Heart left ventricle (tissue), 16 donors: ENCODE measurements at regions of chr5 and their contacts with region 1.

Region 1: GRCh38 chr5:176660860-176661641 is 13.8 kb downstream of the TSPAN17 start:
- DNase-seq: peak; percentile 71 to 87 (median 76)
- ATAC-seq: peak; percentile 68 to 81 (median 77)
- H3K4me3 ChIP-seq: no peak overlapping the region
- H3K27ac ChIP-seq: no peak overlapping the region
- H3K4me1 ChIP-seq: peaks cover 0 to 31% (median 12%) of the 10 kb centered on the region in 12 donors
- H3K27me3 ChIP-seq: peaks cover 0 to 40% (median 14%) of the 10 kb centered on the region in 9 donors
- CTCF ChIP-seq: peak; percentile 85 to 100 (median 97)
- POLR2A ChIP-seq: no peak

Region 2: DNA sequence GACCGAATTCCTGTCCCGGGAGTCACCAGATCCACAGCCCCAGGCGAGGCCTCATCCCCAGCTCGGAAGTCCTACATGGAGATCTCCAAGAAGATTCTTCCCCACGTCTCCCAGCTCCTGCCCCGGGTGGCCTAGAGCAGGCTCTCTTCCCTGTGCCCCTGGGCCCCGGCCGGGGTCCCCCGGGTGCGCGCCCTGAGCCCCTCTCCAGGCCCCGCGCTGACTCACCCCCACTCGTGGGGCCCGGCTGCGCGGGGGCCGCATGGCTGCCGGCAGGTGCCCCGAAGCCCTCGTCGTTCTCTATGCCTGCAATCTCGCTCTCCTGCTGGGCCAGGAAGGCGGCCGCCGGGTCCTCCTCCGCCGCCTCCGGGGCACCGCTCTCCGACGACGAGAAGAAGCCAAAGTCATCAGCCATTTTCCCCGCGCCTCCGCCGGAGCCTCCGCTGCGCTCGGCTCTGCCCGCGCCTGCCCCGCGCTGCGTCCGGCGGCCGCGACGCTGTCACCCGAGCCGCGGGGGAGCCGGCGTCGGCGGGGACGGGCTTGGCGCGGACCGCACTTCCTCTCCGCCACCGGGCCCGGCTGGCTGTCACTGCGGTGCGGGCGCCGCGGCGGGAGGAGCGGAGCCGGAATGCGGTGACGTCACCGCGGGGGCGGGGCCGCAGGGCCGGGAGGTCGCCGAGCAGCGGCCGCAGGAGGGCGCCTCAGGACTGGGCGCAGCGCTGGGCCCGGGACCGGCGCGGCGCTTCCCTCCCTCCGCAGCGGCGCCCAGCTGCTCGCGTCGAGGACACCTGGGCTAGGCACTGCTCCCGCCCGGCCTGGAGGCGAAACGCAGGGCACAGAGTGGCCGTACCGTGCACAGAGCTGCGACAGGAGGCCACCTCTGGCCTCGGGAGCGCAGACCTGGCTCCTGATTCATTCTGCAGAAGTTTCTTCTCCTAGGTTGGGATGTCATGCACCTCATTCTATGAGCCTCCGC is 244.8 kb before region 1 on chr5 and contains the start of gene CLTB:
- intact Hi-C with region 1: loop called in 1 of 10 experiments (anchors 10 kb)
- DNase-seq: peak; percentile 92 to 97 (median 94)
- ATAC-seq: peak; percentile 90 to 94 (median 93)
- H3K4me3 ChIP-seq: peak within 1 kb of the TSS; percentile 47 to 100 (median 84)
- H3K27ac ChIP-seq: peak within 1 kb of the TSS; percentile 83 to 99 (median 96)
- H3K4me1 ChIP-seq: peaks cover 8 to 52% (median 42%) of the 10 kb centered on the region in 12 donors
- H3K27me3 ChIP-seq: no peaks in the 10 kb centered on the region
- CTCF ChIP-seq: peak; percentile 43 to 92 (median 83)
- POLR2A ChIP-seq: peak; percentile 85 to 93
- total RNA-seq, gene CLTB: 185 to 401 (median 231) TPM

Region 3: GRCh38 chr5:176536902-176537607 is 124.0 kb before region 1 on chr5 and contains the start of gene RNF44:
- intact Hi-C with region 1: no loop called
- DNase-seq: peak; percentile 97 to 99 (median 98)
- ATAC-seq: peak; percentile 83 to 88 (median 88)
- H3K4me3 ChIP-seq: peak within 1 kb of the TSS; percentile 56 to 98 (median 88)
- H3K27ac ChIP-seq: peak within 1 kb of the TSS; percentile 92 to 100 (median 96)
- H3K4me1 ChIP-seq: peaks cover 15 to 78% (median 55%) of the 10 kb centered on the region in 12 donors
- H3K27me3 ChIP-seq: no peaks in the 10 kb centered on the region
- CTCF ChIP-seq: no peak
- POLR2A ChIP-seq: peak in 1 of 2 donors; percentile 36
- total RNA-seq, gene RNF44: 9.2 to 35.7 (median 21.0) TPM

Region 4: GRCh38 chr5:176817841-176818377 is 156.9 kb after region 1 on chr5:
- intact Hi-C with region 1: loop called in 2 of 10 experiments (anchors 2 to 10 kb)
- DNase-seq: peak in 1 of 5 donors; percentile 22
- ATAC-seq: peak in 1 of 4 donors; percentile 34
- H3K4me3 ChIP-seq: peak overlapping the region in 11 of 12 donors; percentile 10 to 51 (median 40)
- H3K27ac ChIP-seq: no peak overlapping the region
- H3K4me1 ChIP-seq: peaks cover 0 to 15% (median 3%) of the 10 kb centered on the region in 12 donors
- H3K27me3 ChIP-seq: peaks cover 29 to 79% (median 45%) of the 10 kb centered on the region in 9 donors
- CTCF ChIP-seq: peak in 3 of 12 donors; percentile 18 to 21 (median 20)
- POLR2A ChIP-seq: no peak

Region 5: GRCh38 chr5:176837707-176838115 is 176.7 kb after region 1 on chr5:
- intact Hi-C with region 1: loop called in 1 of 10 experiments (anchors 10 kb)
- DNase-seq: peak; percentile 87 to 94 (median 93)
- ATAC-seq: peak; percentile 80 to 98 (median 96)
- H3K4me3 ChIP-seq: no peak overlapping the region
- H3K27ac ChIP-seq: no peak overlapping the region
- H3K4me1 ChIP-seq: no peaks in the 10 kb centered on the region
- H3K27me3 ChIP-seq: peaks cover 0 to 46% (median 11%) of the 10 kb centered on the region in 9 donors
- CTCF ChIP-seq: no peak
- POLR2A ChIP-seq: no peak

Region 6: GRCh38 chr5:176959051-176959450 is 298.0 kb after region 1 on chr5:
- intact Hi-C with region 1: loop called (anchors 2 to 5 kb)
- DNase-seq: no peak
- ATAC-seq: no peak
- H3K4me3 ChIP-seq: no peak overlapping the region
- H3K27ac ChIP-seq: no peak overlapping the region
- H3K4me1 ChIP-seq: peaks cover 0 to 11% (median 2%) of the 10 kb centered on the region in 12 donors
- H3K27me3 ChIP-seq: no peaks in the 10 kb centered on the region
- CTCF ChIP-seq: peak; percentile 30 to 56 (median 46)
- POLR2A ChIP-seq: no peak